ENCODE measurements at regions of chr4 and their contacts with region 1.

Region 1: DNA sequence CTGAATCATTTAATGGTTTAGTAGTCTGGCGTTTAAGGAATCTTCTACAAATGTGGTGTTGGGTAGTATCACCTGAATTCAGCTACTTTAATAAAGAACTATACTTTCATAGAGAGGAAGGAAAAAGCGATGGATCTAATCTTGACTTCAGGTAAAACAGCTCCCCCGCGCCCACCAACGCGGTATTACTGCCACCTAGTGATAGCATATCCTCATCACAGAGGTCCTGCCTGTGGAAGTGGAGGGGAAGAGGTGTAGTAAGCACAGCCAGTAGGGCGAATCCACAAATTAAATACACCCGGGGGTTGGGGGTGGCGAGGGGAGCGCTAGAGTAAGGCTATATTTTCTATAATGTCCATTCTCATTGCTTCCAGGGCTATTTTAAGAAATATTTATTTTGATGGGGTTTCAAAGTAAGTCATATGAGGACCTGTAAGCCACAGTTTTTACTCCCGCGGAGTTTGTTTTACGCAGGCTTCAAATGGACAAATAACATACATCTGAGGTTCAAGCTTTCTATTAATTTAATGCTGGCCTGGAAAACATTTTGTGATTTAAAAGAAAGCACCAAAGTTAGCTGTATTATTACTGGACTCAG is 8.3 kb upstream of the DAPP1 start:
- DNase-seq: peak; percentile 69
- CTCF ChIP-seq: peak; percentile 82

Region 2: GRCh38 chr4:99552872-99553271 is 255.5 kb before region 1 on chr4:
- CTCF ChIA-PET with region 1: interaction called, 14 read pairs
- POLR2A ChIA-PET with region 1: no interaction called
- DNase-seq: no peak
- CTCF ChIP-seq: no peak

Region 3: GRCh38 chr4:99821918-99822503 is 13.7 kb after region 1 on chr4:
- CTCF ChIA-PET with region 1: interaction called, 32 read pairs
- POLR2A ChIA-PET with region 1: no interaction called
- DNase-seq: no peak
- CTCF ChIP-seq: no peak

Region 4: GRCh38 chr4:99875072-99875471 is 66.7 kb after region 1 on chr4:
- CTCF ChIA-PET with region 1: interaction called, 10 read pairs
- POLR2A ChIA-PET with region 1: no interaction called
- DNase-seq: no peak
- CTCF ChIP-seq: no peak

Region 5: GRCh38 chr4:99894161-99894997 is 86.0 kb after region 1 on chr4 and contains the start of gene LAMTOR3:
- CTCF ChIA-PET with region 1: interaction called, 13 read pairs
- POLR2A ChIA-PET with region 1: no interaction called
- DNase-seq: peak; percentile 94
- CTCF ChIP-seq: no peak

Region 6: DNA sequence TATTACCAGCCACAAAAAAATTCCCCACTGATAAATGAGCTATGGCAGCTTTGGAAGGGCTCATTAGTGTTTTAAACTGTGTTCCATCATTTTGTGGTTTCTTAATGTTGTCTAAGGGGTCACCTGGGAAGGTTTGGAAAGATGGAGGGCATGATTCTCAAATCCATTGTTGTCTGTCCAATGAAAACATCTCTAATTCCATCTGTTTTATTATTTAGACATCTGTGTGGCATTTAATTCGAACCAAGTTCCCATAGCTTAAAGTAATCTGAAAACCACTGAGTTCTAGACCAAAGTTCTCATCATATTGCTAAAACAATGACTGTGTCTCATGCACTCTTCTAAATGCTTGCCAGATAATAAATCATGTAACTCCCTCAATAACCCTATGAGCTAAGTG is 1642.7 kb after region 1 on chr4:
- CTCF ChIA-PET with region 1: no interaction called
- POLR2A ChIA-PET with region 1: no interaction called
- DNase-seq: no peak
- CTCF ChIP-seq: no peak